Calu3 (cell line): ENCODE measurements at regions of chr6 and their contacts with region 1.

Region 1: GRCh38 chr6:125858427-125859320 is 67.9 kb downstream of the NCOA7 start:
- DNase-seq: peak; percentile 60
- H3K4me3 Mint-ChIP-seq: no peak overlapping the region
- H3K27ac Mint-ChIP-seq: peak overlapping the region; percentile 64
- H3K4me1 Mint-ChIP-seq: peaks cover 13% of the 10 kb centered on the region
- H3K27me3 Mint-ChIP-seq: no peaks in the 10 kb centered on the region
- CTCF ChIP-seq: peak; percentile 44

Region 2: GRCh38 chr6:125923987-125924568 is 65.4 kb after region 1 on chr6:
- CTCF ChIA-PET with region 1: interaction called, 3 read pairs
- intact Hi-C with region 1: loop called (anchors 5 kb)
- DNase-seq: no peak
- H3K4me3 Mint-ChIP-seq: peak overlapping the region; percentile 86
- H3K27ac Mint-ChIP-seq: peak overlapping the region; percentile 97
- H3K4me1 Mint-ChIP-seq: peaks cover 17% of the 10 kb centered on the region
- H3K27me3 Mint-ChIP-seq: no peaks in the 10 kb centered on the region
- CTCF ChIP-seq: no peak

Region 3: DNA sequence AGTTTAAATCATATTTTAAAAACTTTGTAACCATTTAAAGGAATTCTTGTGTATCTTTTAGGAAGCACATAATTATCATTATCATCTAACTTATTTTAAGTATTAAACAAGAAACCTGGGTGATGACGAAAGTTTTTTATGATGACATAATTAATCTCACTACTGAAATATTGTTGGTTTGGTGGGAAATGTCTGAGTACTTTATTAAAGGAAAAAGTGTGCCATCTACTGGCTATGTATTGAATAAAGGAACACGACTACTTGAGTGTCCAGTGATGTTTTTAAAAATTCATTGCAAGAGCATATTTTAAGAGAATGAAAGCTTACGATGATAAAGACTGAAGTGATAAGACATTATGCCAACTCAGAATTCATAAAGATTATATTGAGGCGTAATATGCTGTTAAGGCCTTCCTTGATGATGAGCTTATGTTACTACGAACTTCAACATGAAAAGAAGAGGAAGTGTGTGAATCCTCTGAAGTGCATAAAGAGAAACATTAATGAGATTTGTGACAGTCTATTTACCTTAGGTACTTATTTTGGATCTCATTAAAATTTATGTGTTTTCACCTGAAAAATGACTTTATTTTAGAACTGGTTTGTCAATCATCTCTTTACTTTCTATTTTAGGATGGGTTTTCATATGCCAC is 115.7 kb after region 1 on chr6:
- CTCF ChIA-PET with region 1: no interaction called
- intact Hi-C with region 1: loop called (anchors 5 kb)
- DNase-seq: no peak
- H3K4me3 Mint-ChIP-seq: no peak overlapping the region
- H3K27ac Mint-ChIP-seq: no peak overlapping the region
- H3K4me1 Mint-ChIP-seq: no peaks in the 10 kb centered on the region
- H3K27me3 Mint-ChIP-seq: no peaks in the 10 kb centered on the region
- CTCF ChIP-seq: no peak